ENCODE measurements at regions of chr11 and their contacts with region 1.

Region 1: DNA sequence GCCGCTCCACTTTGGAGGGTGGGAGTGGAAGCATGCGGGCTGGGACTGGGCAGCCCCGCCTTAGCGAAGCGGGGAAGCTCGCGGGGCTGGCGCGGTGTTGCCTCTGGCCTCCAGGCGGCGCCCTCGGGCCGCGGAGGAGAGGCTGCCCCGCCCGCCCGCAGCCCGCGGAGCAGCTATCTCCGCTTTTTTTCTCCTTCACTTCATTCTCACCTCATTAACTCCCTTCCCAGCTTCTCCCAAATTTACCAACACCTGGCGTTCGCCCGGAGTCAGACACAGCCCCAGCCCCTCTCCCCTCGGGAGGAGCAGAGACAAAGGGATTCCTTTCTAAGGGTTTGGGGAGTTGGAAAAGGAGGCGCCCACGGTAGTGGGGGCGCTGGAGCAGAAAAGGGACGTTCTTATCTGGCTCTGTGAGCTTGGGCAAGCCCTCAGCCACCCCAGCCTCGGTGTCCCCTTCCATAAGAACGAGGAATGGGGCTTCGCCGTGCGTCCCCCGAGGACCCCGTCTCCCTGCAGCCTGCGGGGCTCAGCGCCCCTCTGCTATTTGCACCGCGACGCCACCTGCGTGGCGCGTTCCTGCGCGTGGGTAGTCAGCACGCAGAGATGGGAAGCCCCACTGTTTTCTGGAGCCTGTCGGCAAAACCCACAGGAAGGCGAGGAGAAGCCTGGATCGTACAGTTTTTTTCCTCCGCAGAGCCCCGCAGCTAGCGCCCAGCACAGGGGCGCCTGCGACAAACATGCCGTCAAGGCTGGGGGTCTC is 1.5 kb upstream of the WNT11 start:
- DNase-seq: peak; percentile 81
- H3K4me3 Mint-ChIP-seq: peak overlapping the region; percentile 66
- H3K27ac Mint-ChIP-seq: no peak overlapping the region
- H3K4me1 Mint-ChIP-seq: peaks cover 14% of the 10 kb centered on the region
- H3K27me3 Mint-ChIP-seq: peaks cover 51% of the 10 kb centered on the region

Region 2: DNA sequence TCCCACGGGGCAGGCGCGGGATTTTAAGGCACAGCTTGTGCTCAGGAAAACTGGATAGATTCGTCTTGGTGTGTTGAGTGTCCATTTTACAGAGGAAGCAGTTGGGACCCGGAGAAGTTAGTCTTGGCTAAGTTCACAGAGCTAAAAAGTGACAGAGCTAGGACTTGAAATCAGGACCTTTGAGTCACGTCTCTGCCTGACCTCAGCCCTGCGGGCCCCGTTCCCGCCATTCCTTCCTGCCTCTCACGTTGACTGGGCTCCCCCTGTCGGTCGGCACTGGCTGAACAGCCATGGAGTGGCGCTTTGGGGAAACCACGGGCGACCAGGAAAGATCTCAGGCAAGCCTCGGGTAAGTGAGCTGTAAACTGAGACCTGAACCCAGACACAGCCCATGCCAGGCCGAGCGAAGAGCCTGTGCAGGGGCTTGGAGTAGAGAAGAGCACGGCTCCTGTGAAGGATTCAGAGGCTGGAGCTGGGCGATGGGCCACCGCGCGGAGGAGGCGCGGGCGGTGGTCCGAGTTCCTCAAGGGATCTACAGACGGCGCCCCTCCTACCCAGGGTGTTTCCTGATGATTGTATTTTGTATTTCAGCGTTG is 55.6 kb before region 1 on chr11:
- CTCF ChIA-PET with region 1: interaction called, 16 read pairs
- POLR2A ChIA-PET with region 1: no interaction called
- intact Hi-C with region 1: no loop called
- DNase-seq: peak; percentile 94
- H3K4me3 Mint-ChIP-seq: peak overlapping the region; percentile 51
- H3K27ac Mint-ChIP-seq: no peak overlapping the region
- H3K4me1 Mint-ChIP-seq: peaks cover 18% of the 10 kb centered on the region
- H3K27me3 Mint-ChIP-seq: peaks cover 3% of the 10 kb centered on the region

Region 3: GRCh38 chr11:76235233-76236091 is 27.6 kb after region 1 on chr11:
- CTCF ChIA-PET with region 1: interaction called, 94 read pairs
- POLR2A ChIA-PET with region 1: interaction called, 5 read pairs
- intact Hi-C with region 1: loop called (anchors 1 kb)
- DNase-seq: peak; percentile 96
- H3K4me3 Mint-ChIP-seq: peak overlapping the region; percentile 81
- H3K27ac Mint-ChIP-seq: peak overlapping the region; percentile 84
- H3K4me1 Mint-ChIP-seq: peaks cover 44% of the 10 kb centered on the region
- H3K27me3 Mint-ChIP-seq: no peaks in the 10 kb centered on the region

Region 4: GRCh38 chr11:76302996-76303395 is 95.2 kb after region 1 on chr11:
- CTCF ChIA-PET with region 1: interaction called, 13 read pairs
- POLR2A ChIA-PET with region 1: no interaction called
- intact Hi-C with region 1: no loop called
- DNase-seq: no peak
- H3K4me3 Mint-ChIP-seq: no peak overlapping the region
- H3K27ac Mint-ChIP-seq: no peak overlapping the region
- H3K4me1 Mint-ChIP-seq: no peaks in the 10 kb centered on the region
- H3K27me3 Mint-ChIP-seq: peaks cover 2% of the 10 kb centered on the region

Region 5: GRCh38 chr11:76339221-76339620 is 131.4 kb after region 1 on chr11:
- CTCF ChIA-PET with region 1: interaction called, 11 read pairs
- POLR2A ChIA-PET with region 1: no interaction called
- intact Hi-C with region 1: no loop called
- DNase-seq: peak; percentile 23
- H3K4me3 Mint-ChIP-seq: no peak overlapping the region
- H3K27ac Mint-ChIP-seq: no peak overlapping the region
- H3K4me1 Mint-ChIP-seq: peaks cover 21% of the 10 kb centered on the region
- H3K27me3 Mint-ChIP-seq: no peaks in the 10 kb centered on the region

Region 6: DNA sequence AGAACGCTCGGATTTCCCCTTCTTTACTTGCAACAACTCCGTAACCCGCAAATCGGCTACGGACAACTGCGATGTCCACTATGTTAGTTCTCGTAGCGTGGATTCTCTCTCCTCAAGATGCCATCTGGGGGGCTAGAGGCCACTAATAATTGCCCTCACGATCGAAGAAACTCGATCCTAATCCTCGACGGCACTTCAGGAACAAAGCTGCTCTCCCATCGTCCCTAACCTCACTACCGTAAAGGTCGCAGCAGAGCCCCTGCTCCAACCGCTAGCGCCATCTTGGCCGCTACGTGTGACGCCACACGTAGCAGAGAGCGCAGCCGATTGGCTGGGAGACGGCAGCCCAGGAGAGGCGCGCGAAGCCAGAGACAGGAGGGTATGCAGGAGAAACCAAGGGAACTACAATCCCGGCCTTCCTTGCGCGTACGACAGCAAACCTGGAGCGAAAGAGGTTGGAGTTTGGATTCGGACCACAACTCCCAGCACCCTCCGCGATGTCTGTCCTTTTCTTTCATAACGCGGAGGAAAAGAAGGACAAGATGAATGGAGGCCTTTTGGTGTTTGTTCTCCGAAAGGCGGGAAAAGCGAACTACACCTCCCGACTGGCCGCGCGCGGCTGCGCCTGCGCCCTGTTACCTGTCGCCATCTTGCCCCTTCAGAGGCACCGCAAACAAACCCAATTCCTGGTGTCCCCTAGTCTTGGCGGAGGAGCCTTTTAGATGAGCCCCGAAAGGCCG is 236.7 kb after region 1 on chr11 and contains the start of gene EMSY:
- CTCF ChIA-PET with region 1: interaction called, 10 read pairs
- POLR2A ChIA-PET with region 1: no interaction called
- intact Hi-C with region 1: no loop called
- DNase-seq: peak; percentile 95
- H3K4me3 Mint-ChIP-seq: peak within 1 kb of the TSS; percentile 98
- H3K27ac Mint-ChIP-seq: peak within 1 kb of the TSS; percentile 91
- H3K4me1 Mint-ChIP-seq: peaks cover 33% of the 10 kb centered on the region
- H3K27me3 Mint-ChIP-seq: no peaks in the 10 kb centered on the region
- total RNA-seq, gene EMSY: 23.5 to 25.4 TPM

Region 7: GRCh38 chr11:76680518-76681425 is 472.9 kb after region 1 on chr11:
- CTCF ChIA-PET with region 1: interaction called, 14 read pairs
- POLR2A ChIA-PET with region 1: no interaction called
- intact Hi-C with region 1: loop called (anchors 2 kb)
- DNase-seq: peak; percentile 75
- H3K4me3 Mint-ChIP-seq: no peak overlapping the region
- H3K27ac Mint-ChIP-seq: no peak overlapping the region
- H3K4me1 Mint-ChIP-seq: peaks cover 7% of the 10 kb centered on the region
- H3K27me3 Mint-ChIP-seq: peaks cover 8% of the 10 kb centered on the region